ENCODE measurements at regions of chr9 and their contacts with region 1.

Region 1: GRCh38 chr9:109914280-109915027 is 134.5 kb downstream of the PALM2AKAP2 start:
- DNase-seq: peak; percentile 97
- ATAC-seq: peak; percentile 71
- H3K4me3 ChIP-seq: no peak overlapping the region
- H3K27ac ChIP-seq: peak overlapping the region; percentile 88
- H3K4me1 ChIP-seq: peaks cover 20% of the 10 kb centered on the region
- H3K27me3 ChIP-seq: no peaks in the 10 kb centered on the region
- CTCF ChIP-seq: no peak
- POLR2A ChIP-seq: no peak
- RAD21 ChIP-seq: no peak; the same call in 1 of the 2 replicates

Region 2: DNA sequence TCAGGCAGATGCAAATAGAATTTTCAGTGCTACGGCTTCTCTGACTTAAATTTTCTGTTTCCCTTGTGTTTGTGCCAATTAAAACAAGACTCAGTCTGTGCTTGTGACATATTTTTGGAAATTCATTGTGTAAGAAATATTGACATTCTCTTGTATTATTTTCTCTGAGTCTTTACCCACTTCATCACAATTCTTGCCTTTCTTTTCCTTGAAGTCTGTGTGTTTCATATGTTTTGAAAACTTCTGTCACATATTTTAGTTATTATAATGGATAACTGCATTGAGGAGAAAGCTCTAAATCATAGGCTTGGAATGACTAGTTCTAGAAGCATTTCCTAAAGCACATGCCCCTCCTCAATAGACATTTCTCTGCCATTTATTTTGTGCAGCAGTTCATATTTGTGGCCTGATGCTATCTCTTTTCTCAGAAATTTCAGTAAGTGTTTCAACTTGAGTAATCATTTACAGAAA is 72.1 kb after region 1 on chr9:
- CTCF ChIA-PET with region 1: no interaction called
- POLR2A ChIA-PET with region 1: no interaction called
- dilution Hi-C with region 1: no loop called
- in situ Hi-C with region 1: no loop called
- intact Hi-C with region 1: loop called (anchors 2 kb)
- DNase-seq: peak; percentile 93
- ATAC-seq: peak; percentile 94
- H3K4me3 ChIP-seq: no peak overlapping the region
- H3K27ac ChIP-seq: peak overlapping the region; percentile 61; the same call in 1 of the 2 replicates
- H3K4me1 ChIP-seq: peaks cover 14% of the 10 kb centered on the region
- H3K27me3 ChIP-seq: no peaks in the 10 kb centered on the region
- CTCF ChIP-seq: no peak
- POLR2A ChIP-seq: no peak
- RAD21 ChIP-seq: no peak